ENCODE measurements at regions of chr9 and their contacts with region 1.

Region 1: DNA sequence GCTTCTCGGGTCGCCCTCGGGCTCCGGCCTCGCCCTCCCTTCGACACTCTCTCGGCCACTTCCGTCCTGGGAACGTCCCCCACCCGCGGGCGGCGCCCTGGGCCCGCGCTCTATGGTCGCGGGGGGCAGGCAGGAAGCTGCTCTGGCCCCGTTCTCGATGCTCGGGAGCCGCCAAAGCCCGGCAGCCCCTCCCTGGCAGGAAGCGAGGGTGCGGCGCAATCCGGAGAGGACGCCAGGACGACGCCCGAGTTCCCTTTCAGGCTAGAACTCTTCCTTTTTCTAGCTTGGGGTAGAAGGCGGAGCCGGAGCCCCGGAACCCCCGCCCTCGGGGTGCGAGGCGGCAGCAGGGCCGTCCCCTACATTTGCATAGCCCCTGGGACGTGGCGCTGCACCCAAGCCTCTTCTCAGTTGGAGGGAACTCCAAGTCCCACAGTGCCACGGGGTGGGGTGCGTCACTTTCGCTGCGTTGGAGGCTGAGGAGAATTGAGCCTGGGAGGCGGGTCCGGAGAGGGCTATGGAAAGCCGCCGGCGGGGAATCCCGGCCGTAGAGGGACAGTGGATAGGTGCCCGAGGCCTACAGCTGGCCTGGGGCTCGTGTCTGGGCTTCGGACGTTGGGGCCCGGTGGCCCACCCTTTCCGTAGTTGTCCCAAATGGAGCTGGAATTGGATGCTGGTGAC is at the starts of genes CREB3 and TLN1:
- DNase-seq: peak; percentile 99
- ATAC-seq: peak; percentile 93
- H3K4me3 Mint-ChIP-seq: no peak within 1 kb of the TSS
- H3K27ac Mint-ChIP-seq: peak within 1 kb of the TSS; percentile 89
- H3K4me1 Mint-ChIP-seq: peaks cover 23% of the 10 kb centered on the region
- H3K27me3 Mint-ChIP-seq: no peaks in the 10 kb centered on the region
- total RNA-seq, gene CREB3: 21.6 to 21.7 TPM
- total RNA-seq, gene TLN1: 448 to 450 TPM

Region 2: GRCh38 chr9:35579130-35579529 is 153.1 kb before region 1 on chr9:
- CTCF ChIA-PET with region 1: no interaction called
- POLR2A ChIA-PET with region 1: no interaction called
- DNase-seq: no peak
- ATAC-seq: no peak
- H3K4me3 Mint-ChIP-seq: no peak overlapping the region
- H3K27ac Mint-ChIP-seq: no peak overlapping the region
- H3K4me1 Mint-ChIP-seq: no peaks in the 10 kb centered on the region
- H3K27me3 Mint-ChIP-seq: no peaks in the 10 kb centered on the region

Region 3: GRCh38 chr9:35603987-35604577 is 128.2 kb before region 1 on chr9:
- CTCF ChIA-PET with region 1: interaction called, 20 read pairs
- POLR2A ChIA-PET with region 1: interaction called, 3 read pairs
- DNase-seq: peak; percentile 100
- ATAC-seq: peak; percentile 88
- H3K4me3 Mint-ChIP-seq: peak overlapping the region; percentile 90
- H3K27ac Mint-ChIP-seq: peak overlapping the region; percentile 96
- H3K4me1 Mint-ChIP-seq: peaks cover 37% of the 10 kb centered on the region
- H3K27me3 Mint-ChIP-seq: no peaks in the 10 kb centered on the region

Region 4: GRCh38 chr9:35616681-35617459 is 115.4 kb before region 1 on chr9:
- CTCF ChIA-PET with region 1: interaction called, 30 read pairs
- POLR2A ChIA-PET with region 1: interaction called, 3 read pairs
- DNase-seq: peak; percentile 78
- ATAC-seq: peak; percentile 65
- H3K4me3 Mint-ChIP-seq: peak overlapping the region; percentile 79
- H3K27ac Mint-ChIP-seq: peak overlapping the region; percentile 92
- H3K4me1 Mint-ChIP-seq: peaks cover 62% of the 10 kb centered on the region
- H3K27me3 Mint-ChIP-seq: no peaks in the 10 kb centered on the region

Region 5: DNA sequence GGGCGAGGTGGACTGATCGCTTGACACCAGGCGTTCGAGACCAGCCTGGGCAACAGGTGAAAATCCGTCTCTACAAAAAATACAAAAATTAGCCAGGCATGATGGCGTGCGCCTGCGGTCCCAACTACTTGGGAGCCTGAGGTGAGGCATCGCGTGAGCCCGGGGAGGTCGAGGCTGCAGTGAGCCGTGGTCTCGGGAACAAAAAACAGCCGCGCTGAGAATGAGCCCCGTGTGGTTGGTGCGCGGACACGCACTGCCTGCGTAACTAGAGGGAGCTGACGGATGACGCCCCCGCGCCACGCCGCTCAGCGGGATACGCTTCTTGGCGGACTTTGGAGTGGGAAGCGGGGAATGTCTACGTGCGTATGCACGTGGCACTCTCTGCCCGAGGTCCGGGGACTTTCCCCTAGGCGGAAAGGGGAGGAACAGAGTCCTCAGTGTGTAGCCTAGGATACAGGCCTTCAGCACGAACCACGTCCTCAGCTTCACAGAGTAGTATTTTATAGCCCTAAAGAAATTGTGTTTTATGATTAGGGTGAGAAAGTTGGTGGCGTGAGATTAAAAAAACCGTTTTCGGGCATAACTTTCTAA is 74.6 kb before region 1 on chr9 and contains the start of gene RMRP:
- CTCF ChIA-PET with region 1: interaction called, 27 read pairs
- POLR2A ChIA-PET with region 1: interaction called, 7 read pairs
- DNase-seq: peak; percentile 94
- ATAC-seq: peak; percentile 92
- H3K4me3 Mint-ChIP-seq: peak within 1 kb of the TSS; percentile 92
- H3K27ac Mint-ChIP-seq: peak within 1 kb of the TSS; percentile 97
- H3K4me1 Mint-ChIP-seq: peaks cover 62% of the 10 kb centered on the region
- H3K27me3 Mint-ChIP-seq: peaks cover 3% of the 10 kb centered on the region
- total RNA-seq, gene RMRP: 7,126 to 12,592 TPM

Region 6: DNA sequence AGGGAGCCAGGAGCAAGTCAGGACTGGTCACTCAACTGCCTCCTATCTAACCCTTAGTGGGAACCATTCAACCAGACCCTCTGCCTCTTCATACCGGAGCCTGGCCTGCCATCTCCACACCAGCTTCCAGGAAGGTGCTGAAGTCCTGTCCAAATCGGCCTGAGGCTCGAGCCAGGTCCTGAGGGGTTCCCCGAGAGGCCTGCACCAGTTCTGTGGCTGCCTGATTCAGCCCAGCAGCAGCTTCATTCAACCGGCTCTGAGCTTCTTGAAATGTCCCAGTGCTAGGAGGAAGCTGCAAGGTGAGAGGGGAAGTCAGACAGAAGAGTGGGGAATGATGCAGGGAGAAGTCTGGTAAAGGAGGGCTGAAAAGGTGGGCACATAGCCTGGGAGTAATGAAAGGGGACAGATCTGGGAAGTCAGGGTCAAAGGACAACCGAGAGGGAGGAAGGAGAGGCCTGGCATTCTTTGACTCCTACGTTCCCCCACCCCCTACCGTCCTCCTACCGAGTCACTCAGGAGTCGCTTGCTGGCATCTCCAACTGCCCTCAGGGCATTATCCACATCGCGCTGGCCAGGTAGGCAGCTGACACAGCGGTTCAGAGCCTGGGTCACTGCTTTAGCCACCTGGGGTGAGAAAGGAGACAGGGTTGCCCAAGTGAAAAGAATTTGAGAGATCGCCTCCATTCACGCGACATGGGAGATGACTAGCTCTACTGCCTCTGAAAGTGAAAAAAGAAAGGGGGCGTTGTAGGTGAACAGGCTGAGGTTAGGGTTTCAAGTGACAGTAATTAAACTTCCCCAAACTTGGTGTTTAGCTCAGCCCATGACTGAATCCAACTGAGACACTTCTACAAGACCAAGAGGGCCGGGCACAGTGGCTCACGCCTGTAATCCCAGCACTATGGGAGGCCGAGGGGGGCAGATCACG is 20.5 kb before region 1 on chr9:
- CTCF ChIA-PET with region 1: interaction called, 16 read pairs
- POLR2A ChIA-PET with region 1: interaction called, 3 read pairs
- DNase-seq: no peak
- ATAC-seq: no peak
- H3K4me3 Mint-ChIP-seq: no peak overlapping the region
- H3K27ac Mint-ChIP-seq: peak overlapping the region; percentile 45
- H3K4me1 Mint-ChIP-seq: peaks cover 3% of the 10 kb centered on the region
- H3K27me3 Mint-ChIP-seq: no peaks in the 10 kb centered on the region

Region 7: DNA sequence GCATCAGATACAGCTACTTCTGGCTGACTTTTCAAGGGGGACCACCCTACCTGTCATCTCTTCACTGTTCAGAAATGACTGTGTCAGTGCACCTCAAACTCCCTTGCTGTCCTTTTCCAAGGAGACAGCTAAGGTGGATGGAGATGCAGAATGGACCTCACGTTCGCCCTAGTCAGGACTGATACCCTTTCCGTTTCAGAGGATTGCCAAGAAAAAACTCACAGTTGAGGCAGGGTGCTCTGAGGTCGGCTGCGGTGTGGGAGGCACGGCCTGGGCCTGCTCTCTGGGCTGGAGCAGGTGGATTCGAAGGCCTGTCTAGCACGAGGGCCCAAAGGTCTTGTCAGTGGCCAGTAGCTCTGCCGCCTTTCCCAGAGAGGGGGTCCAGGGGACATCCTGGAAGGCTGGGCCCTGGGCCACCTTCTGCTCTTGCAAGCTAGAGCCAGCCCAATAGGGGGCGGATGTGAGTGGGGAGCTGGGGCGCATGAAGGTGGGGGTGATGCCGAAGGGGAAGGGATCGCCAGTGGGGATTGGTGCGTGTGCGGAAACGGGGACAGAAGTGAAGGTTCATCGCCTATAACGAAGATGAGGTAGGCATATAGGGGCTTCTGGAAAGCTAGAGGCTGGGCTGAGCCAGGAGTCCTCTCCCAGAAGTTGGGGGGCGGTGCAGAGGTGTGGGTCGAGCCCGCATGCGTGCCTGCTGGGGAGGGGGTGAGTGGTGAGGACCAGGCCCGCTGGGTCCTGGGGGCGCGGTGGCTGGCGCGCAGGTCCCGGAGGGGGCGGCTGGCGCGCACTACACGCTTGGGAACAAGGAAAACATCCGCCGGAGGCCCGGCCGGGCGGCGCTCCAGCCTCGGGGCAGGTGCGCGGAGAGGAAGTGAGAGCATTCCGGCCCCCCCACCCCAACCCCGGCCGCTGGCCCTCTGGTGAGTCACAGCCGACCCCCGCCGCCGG is 24.3 kb after region 1 on chr9:
- CTCF ChIA-PET with region 1: interaction called, 61 read pairs
- POLR2A ChIA-PET with region 1: interaction called, 3 read pairs
- DNase-seq: peak; percentile 87
- ATAC-seq: peak; percentile 87
- H3K4me3 Mint-ChIP-seq: peak overlapping the region; percentile 87
- H3K27ac Mint-ChIP-seq: peak overlapping the region; percentile 94
- H3K4me1 Mint-ChIP-seq: peaks cover 35% of the 10 kb centered on the region
- H3K27me3 Mint-ChIP-seq: no peaks in the 10 kb centered on the region

Region 8: GRCh38 chr9:35923927-35924763 is 191.9 kb after region 1 on chr9:
- CTCF ChIA-PET with region 1: no interaction called
- POLR2A ChIA-PET with region 1: no interaction called
- DNase-seq: no peak
- ATAC-seq: no peak
- H3K4me3 Mint-ChIP-seq: no peak overlapping the region
- H3K27ac Mint-ChIP-seq: no peak overlapping the region
- H3K4me1 Mint-ChIP-seq: no peaks in the 10 kb centered on the region
- H3K27me3 Mint-ChIP-seq: peaks cover 6% of the 10 kb centered on the region